Panc1 (cell line): ENCODE measurements at regions of chr16 and their contacts with region 1.

Region 1: DNA sequence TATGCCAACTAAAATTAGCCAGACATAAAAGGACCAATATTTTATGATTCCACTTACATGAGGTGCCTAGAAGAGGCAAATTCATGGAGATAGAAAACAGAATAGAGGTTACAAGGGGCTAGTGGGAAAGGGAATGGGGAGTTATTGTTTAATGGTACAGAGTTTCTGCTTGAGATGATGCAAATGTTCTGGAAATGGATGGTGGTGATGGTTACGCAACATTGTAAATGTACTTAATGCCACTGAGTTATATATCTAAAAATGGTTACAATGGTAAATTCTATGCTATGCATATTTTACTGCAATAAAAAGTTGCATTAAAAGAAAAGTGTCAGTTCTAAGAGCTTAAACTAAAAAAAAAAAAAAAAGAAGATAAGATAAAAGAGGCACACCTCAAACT is 17.9 kb downstream of the MT1X start:
- DNase-seq: no peak
- ATAC-seq: no peak
- H3K4me3 ChIP-seq: no peak overlapping the region
- H3K27ac ChIP-seq: no peak overlapping the region
- H3K4me1 ChIP-seq: no peaks in the 10 kb centered on the region
- H3K27me3 ChIP-seq: no peaks in the 10 kb centered on the region
- CTCF ChIP-seq: no peak

Region 2: DNA sequence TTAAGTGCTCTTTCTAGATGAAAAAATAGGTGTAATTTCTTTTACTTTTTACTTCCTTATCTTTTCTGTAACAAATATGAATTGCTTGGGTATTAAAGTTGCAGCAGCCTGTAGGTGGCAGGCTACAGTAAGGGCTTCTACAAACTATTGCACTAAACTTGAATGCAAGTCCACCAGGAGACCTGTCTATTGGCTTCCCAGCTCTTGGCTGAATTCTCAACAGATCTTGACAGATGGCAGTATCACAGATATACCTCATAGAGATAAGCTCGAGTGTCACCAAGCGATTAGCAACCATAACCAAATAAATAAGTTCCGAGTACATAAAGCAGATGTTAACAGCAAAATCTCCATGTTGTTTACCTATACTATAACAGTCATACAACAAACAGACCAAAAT is 186.2 kb before region 1 on chr16:
- CTCF ChIA-PET with region 1: interaction called, 3 read pairs
- POLR2A ChIA-PET with region 1: no interaction called
- in situ Hi-C with region 1: no loop called
- intact Hi-C with region 1: loop called (anchors 5 kb)
- DNase-seq: peak; percentile 54
- ATAC-seq: peak; percentile 90
- H3K4me3 ChIP-seq: no peak overlapping the region
- H3K27ac ChIP-seq: no peak overlapping the region; the same call in 1 of the 2 replicates
- H3K4me1 ChIP-seq: peaks cover 28% of the 10 kb centered on the region
- H3K27me3 ChIP-seq: no peaks in the 10 kb centered on the region
- CTCF ChIP-seq: peak; percentile 78

Region 3: GRCh38 chr16:56600398-56600999 is 99.7 kb before region 1 on chr16:
- CTCF ChIA-PET with region 1: interaction called, 12 read pairs
- POLR2A ChIA-PET with region 1: no interaction called
- in situ Hi-C with region 1: no loop called
- intact Hi-C with region 1: loop called (anchors 5 kb)
- DNase-seq: no peak
- ATAC-seq: peak; percentile 82
- H3K4me3 ChIP-seq: no peak overlapping the region; a peak in 1 of 4 replicates
- H3K27ac ChIP-seq: no peak overlapping the region
- H3K4me1 ChIP-seq: peaks cover 8% of the 10 kb centered on the region
- H3K27me3 ChIP-seq: no peaks in the 10 kb centered on the region
- CTCF ChIP-seq: peak; percentile 79

Region 4: GRCh38 chr16:56608043-56608875 is 91.9 kb before region 1 on chr16 and contains the start of gene MT2A:
- CTCF ChIA-PET with region 1: interaction called, 12 read pairs
- POLR2A ChIA-PET with region 1: no interaction called
- in situ Hi-C with region 1: no loop called
- intact Hi-C with region 1: loop called (anchors 5 kb)
- DNase-seq: no peak
- ATAC-seq: peak; percentile 77
- H3K4me3 ChIP-seq: peak within 1 kb of the TSS; percentile 78 to 87
- H3K27ac ChIP-seq: peak within 1 kb of the TSS; percentile 95
- H3K4me1 ChIP-seq: peaks cover 62% of the 10 kb centered on the region
- H3K27me3 ChIP-seq: no peaks in the 10 kb centered on the region
- CTCF ChIP-seq: no peak
- total RNA-seq, gene MT2A: 673 TPM

Region 5: DNA sequence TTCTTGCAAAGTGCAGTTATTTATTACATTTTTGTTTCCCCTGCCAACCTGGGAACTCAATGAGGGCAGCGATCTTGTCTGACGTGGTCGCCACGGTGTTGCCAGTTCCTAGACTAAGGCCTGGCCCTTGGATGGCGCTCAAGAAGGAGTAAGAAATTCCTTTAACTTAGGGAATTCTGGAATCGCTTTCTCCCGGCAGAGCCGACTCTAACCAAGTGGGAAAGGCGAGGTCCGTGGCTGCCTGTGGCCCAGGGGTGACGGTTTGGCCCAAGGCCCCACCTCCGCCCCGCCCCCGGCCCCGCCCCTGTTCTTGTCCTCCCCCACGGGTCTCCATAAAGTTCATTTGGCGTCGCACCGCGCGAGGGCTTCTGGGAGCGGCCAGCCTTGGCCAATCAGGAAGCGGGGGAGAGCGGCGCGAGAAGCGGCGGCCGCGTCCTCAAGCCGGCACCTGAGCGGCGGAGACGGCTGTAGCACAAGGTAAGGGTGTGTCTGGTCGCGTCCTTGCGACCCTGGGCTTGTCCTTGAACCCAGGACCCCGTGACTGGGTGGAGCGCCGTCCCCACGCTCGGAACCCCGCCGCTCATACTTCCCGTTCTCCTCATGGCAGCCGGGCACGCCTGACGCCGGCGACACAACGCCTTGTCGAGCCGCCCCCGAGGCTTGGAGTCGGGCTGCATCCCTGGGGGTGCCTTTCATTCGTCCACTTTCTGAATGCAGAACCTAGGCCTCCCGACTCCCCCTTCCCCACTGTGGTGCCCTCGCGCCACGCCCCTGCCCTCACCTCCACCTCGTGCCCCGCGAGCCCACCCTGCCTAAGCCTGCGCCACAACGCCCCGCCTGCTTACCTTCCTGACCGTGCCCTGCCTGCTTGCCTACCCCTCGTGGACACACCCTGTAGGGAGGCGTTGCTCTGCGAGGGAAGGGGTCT is 29.8 kb after region 1 on chr16 and contains the start of gene NUP93:
- CTCF ChIA-PET with region 1: no interaction called
- POLR2A ChIA-PET with region 1: no interaction called
- in situ Hi-C with region 1: no loop called
- intact Hi-C with region 1: no loop called
- DNase-seq: no peak
- ATAC-seq: peak; percentile 98
- H3K4me3 ChIP-seq: peak within 1 kb of the TSS; percentile 85 to 93
- H3K27ac ChIP-seq: peak within 1 kb of the TSS; percentile 95
- H3K4me1 ChIP-seq: peaks cover 9% of the 10 kb centered on the region; the same call in 1 of the 2 replicates
- H3K27me3 ChIP-seq: no peaks in the 10 kb centered on the region
- CTCF ChIP-seq: no peak
- total RNA-seq, gene NUP93: 88.5 TPM